ENCODE measurements at regions of chr5 and their contacts with region 1.

Region 1: DNA sequence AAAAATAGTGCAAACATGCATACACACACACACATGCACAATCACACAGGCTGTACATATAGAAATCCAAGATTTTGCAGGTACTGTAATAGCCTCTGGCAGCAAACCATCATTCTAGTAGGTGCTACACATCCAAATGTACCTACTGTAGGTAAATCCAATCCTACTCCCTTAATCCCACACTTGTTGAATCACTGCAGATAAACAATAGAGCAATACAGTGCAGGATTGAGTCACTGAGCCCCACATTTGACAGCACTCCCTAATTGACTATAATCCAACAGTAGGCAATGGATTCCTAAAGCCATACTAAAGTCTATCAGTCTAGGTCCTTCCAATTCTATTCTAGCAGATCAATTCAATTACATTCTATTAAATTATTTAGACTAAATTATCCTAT is 1640.5 kb upstream of the CDH9 start:
- DNase-seq: no peak
- H3K4me3 ChIP-seq: no peak overlapping the region
- H3K27ac ChIP-seq: no peak overlapping the region
- H3K4me1 ChIP-seq: no peaks in the 10 kb centered on the region
- H3K27me3 ChIP-seq: no peaks in the 10 kb centered on the region
- CTCF ChIP-seq: no peak
- POLR2A ChIP-seq: no peak

Region 2: GRCh38 chr5:27855491-27855890 is 823.4 kb before region 1 on chr5:
- intact Hi-C with region 1: no loop called
- DNase-seq: no peak
- H3K4me3 ChIP-seq: no peak overlapping the region
- H3K27ac ChIP-seq: no peak overlapping the region
- H3K4me1 ChIP-seq: no peaks in the 10 kb centered on the region
- H3K27me3 ChIP-seq: no peaks in the 10 kb centered on the region
- CTCF ChIP-seq: no peak
- POLR2A ChIP-seq: no peak

Region 3: DNA sequence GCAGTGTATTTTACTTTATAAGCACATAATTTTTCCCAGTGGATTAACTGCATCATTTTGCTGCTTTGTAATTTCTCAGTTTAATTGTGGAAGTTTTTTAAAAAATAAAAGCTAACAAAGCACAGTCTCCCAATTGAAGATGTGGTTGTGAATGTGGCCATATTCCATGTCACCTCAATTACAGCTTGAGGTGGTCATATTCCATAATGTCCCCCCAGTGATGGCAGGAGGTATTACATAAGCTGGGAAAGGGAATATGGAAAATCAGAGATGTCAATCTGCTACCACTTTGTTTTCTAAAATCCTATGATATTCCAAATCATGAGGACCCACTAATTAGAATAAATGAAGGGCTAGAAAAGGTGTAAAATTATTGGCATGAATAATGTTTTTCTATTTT is 31.5 kb after region 1 on chr5:
- intact Hi-C with region 1: no loop called
- DNase-seq: no peak
- H3K4me3 ChIP-seq: no peak overlapping the region
- H3K27ac ChIP-seq: no peak overlapping the region
- H3K4me1 ChIP-seq: no peaks in the 10 kb centered on the region
- H3K27me3 ChIP-seq: no peaks in the 10 kb centered on the region
- CTCF ChIP-seq: no peak
- POLR2A ChIP-seq: no peak

Region 4: DNA sequence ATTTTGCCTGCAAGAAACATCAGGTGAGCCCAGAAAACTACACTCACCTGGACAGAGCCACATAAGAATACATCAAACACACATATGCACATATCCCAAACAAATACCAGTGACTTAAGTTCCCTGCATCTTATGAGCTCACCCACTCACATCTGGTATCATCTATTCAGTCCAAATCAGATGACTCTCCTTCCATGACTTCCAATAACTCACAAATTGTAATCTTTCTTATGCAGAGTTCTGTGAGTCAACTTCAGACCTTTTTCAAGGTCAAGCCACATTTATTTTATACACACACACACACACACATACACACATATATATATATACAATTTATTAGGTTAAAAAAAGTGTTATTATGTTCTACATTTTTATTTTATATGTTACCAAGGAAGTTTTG is 71.4 kb after region 1 on chr5:
- intact Hi-C with region 1: loop called in 1 of 2 experiments (anchors 5 kb)
- DNase-seq: no peak
- H3K4me3 ChIP-seq: no peak overlapping the region
- H3K27ac ChIP-seq: no peak overlapping the region
- H3K4me1 ChIP-seq: no peaks in the 10 kb centered on the region
- H3K27me3 ChIP-seq: no peaks in the 10 kb centered on the region
- CTCF ChIP-seq: no peak
- POLR2A ChIP-seq: no peak